Naive thymus-derived CD4-positive, alpha-beta T cell (primary cell): ENCODE measurements at regions of chr3 and their contacts with region 1.

Region 1: GRCh38 chr3:106333911-106334618 is 465.3 kb upstream of the CBLB start:
- DNase-seq: peak in 1 of 9 donors; percentile 45
- ATAC-seq: peak; percentile 47
- H3K4me3 ChIP-seq: no peak overlapping the region
- H3K4me3 Mint-ChIP-seq: peak overlapping the region in 1 of 10 donors; percentile 73
- H3K27ac ChIP-seq: no peak overlapping the region
- H3K27ac Mint-ChIP-seq: peak overlapping the region in 3 of 9 donors; percentile 47 to 86 (median 62)
- H3K4me1 ChIP-seq: peaks cover 0 to 47% of the 10 kb centered on the region in 2 donors
- H3K4me1 Mint-ChIP-seq: peaks cover 19 to 69% (median 38%) of the 10 kb centered on the region in 7 donors
- H3K27me3 ChIP-seq: no peaks in the 10 kb centered on the region
- H3K27me3 Mint-ChIP-seq: no peaks in the 10 kb centered on the region

Region 2: DNA sequence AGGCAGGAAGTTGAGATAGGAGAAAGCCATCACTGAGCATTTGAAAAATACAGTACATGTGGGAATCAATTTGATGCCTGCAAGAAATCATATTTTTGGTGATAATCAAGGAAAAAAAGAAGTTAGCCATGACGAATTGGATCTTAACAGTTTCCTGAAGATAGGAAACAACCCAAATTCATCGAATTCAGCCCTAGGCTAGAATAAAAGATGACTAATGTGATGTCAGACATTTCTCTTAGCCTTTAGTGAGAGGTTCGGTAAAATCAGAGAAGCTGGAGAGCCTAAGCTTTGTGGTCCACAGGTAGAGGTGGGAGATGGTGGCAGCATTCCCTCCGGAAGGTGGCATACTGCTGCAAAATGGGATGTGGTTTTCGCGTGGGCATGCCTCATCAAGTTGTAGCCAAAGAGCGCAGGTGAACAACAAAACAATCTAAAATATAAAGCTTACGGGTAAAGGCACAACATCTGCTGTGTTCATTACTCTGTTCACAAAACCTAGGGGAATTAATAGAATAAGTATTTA is 1111.4 kb before region 1 on chr3:
- CTCF ChIA-PET with region 1: no interaction called
- POLR2A ChIA-PET with region 1: no interaction called
- intact Hi-C with region 1: no loop called
- DNase-seq: no peak
- ATAC-seq: no peak
- H3K4me3 ChIP-seq: no peak overlapping the region
- H3K4me3 Mint-ChIP-seq: no peak overlapping the region
- H3K27ac ChIP-seq: no peak overlapping the region
- H3K27ac Mint-ChIP-seq: no peak overlapping the region
- H3K4me1 ChIP-seq: no peaks in the 10 kb centered on the region
- H3K4me1 Mint-ChIP-seq: no peaks in the 10 kb centered on the region
- H3K27me3 ChIP-seq: no peaks in the 10 kb centered on the region
- H3K27me3 Mint-ChIP-seq: peaks cover 0 to 6% (median 0%) of the 10 kb centered on the region in 5 donors

Region 3: GRCh38 chr3:105836533-105836932 is 497.5 kb before region 1 on chr3:
- CTCF ChIA-PET with region 1: no interaction called
- POLR2A ChIA-PET with region 1: no interaction called
- intact Hi-C with region 1: loop called in 1 of 2 experiments (anchors 10 kb)
- DNase-seq: no peak
- ATAC-seq: peak; percentile 65
- H3K4me3 ChIP-seq: no peak overlapping the region
- H3K4me3 Mint-ChIP-seq: peak overlapping the region in 8 of 10 donors; percentile 4 to 46 (median 19)
- H3K27ac ChIP-seq: no peak overlapping the region
- H3K27ac Mint-ChIP-seq: peak overlapping the region in 7 of 9 donors; percentile 6 to 84 (median 42)
- H3K4me1 ChIP-seq: peaks cover 26 to 44% of the 10 kb centered on the region in 2 donors
- H3K4me1 Mint-ChIP-seq: peaks cover 37 to 87% (median 82%) of the 10 kb centered on the region in 7 donors
- H3K27me3 ChIP-seq: no peaks in the 10 kb centered on the region
- H3K27me3 Mint-ChIP-seq: no peaks in the 10 kb centered on the region

Region 4: GRCh38 chr3:106013971-106014370 is 320.1 kb before region 1 on chr3:
- CTCF ChIA-PET with region 1: interaction called, 3 read pairs
- POLR2A ChIA-PET with region 1: no interaction called
- intact Hi-C with region 1: loop called in 1 of 2 experiments (anchors 10 kb)
- DNase-seq: no peak
- ATAC-seq: no peak
- H3K4me3 ChIP-seq: no peak overlapping the region
- H3K4me3 Mint-ChIP-seq: no peak overlapping the region
- H3K27ac ChIP-seq: no peak overlapping the region
- H3K27ac Mint-ChIP-seq: no peak overlapping the region
- H3K4me1 ChIP-seq: peaks cover 0 to 5% of the 10 kb centered on the region in 2 donors
- H3K4me1 Mint-ChIP-seq: peaks cover 9 to 25% (median 13%) of the 10 kb centered on the region in 7 donors
- H3K27me3 ChIP-seq: no peaks in the 10 kb centered on the region
- H3K27me3 Mint-ChIP-seq: no peaks in the 10 kb centered on the region

Region 5: DNA sequence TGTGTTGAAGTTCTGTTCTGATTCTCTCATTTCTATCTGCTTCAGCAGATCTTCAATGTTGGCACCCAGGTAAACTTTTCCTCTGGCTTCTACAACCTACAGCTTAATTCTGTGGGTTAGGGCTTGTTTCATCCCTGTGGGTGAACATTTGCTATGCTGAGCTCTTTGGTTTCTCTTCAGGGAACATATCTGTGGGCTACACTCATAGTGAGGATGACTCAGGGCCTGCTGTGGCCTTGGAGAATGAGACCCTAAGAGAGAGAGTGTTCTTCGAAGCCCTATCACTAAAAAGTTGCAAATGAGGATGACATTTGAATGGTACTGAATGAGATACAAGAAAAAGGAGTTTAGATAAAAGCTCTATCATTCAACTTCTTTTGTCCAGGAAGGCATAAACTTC is 119.0 kb before region 1 on chr3:
- CTCF ChIA-PET with region 1: no interaction called
- POLR2A ChIA-PET with region 1: no interaction called
- intact Hi-C with region 1: loop called in 1 of 2 experiments (anchors 10 kb)
- DNase-seq: peak in 1 of 9 donors; percentile 31
- ATAC-seq: no peak
- H3K4me3 ChIP-seq: no peak overlapping the region
- H3K4me3 Mint-ChIP-seq: peak overlapping the region in 1 of 10 donors; percentile 5
- H3K27ac ChIP-seq: no peak overlapping the region
- H3K27ac Mint-ChIP-seq: peak overlapping the region in 3 of 9 donors; percentile 14 to 50 (median 18)
- H3K4me1 ChIP-seq: peaks cover 0 to 3% of the 10 kb centered on the region in 2 donors
- H3K4me1 Mint-ChIP-seq: peaks cover 0 to 29% (median 6%) of the 10 kb centered on the region in 7 donors
- H3K27me3 ChIP-seq: no peaks in the 10 kb centered on the region
- H3K27me3 Mint-ChIP-seq: no peaks in the 10 kb centered on the region

Region 6: GRCh38 chr3:106302451-106303221 is 31.4 kb before region 1 on chr3:
- CTCF ChIA-PET with region 1: no interaction called
- POLR2A ChIA-PET with region 1: no interaction called
- intact Hi-C with region 1: loop called in 1 of 2 experiments (anchors 2 kb)
- DNase-seq: peak in 1 of 9 donors; percentile 13
- ATAC-seq: peak; percentile 58
- H3K4me3 ChIP-seq: no peak overlapping the region
- H3K4me3 Mint-ChIP-seq: peak overlapping the region in 1 of 10 donors; percentile 4
- H3K27ac ChIP-seq: no peak overlapping the region
- H3K27ac Mint-ChIP-seq: peak overlapping the region in 6 of 9 donors; percentile 1 to 67 (median 14)
- H3K4me1 ChIP-seq: peaks cover 5 to 10% of the 10 kb centered on the region in 2 donors
- H3K4me1 Mint-ChIP-seq: peaks cover 6 to 41% (median 12%) of the 10 kb centered on the region in 7 donors
- H3K27me3 ChIP-seq: no peaks in the 10 kb centered on the region
- H3K27me3 Mint-ChIP-seq: no peaks in the 10 kb centered on the region

Region 7: GRCh38 chr3:106317141-106318055 is 16.7 kb before region 1 on chr3:
- CTCF ChIA-PET with region 1: no interaction called
- POLR2A ChIA-PET with region 1: no interaction called
- intact Hi-C with region 1: no loop called
- DNase-seq: peak in 6 of 9 donors; percentile 44 to 68 (median 56)
- ATAC-seq: peak; percentile 52
- H3K4me3 ChIP-seq: no peak overlapping the region
- H3K4me3 Mint-ChIP-seq: peak overlapping the region; percentile 26 to 71 (median 46)
- H3K27ac ChIP-seq: no peak overlapping the region
- H3K27ac Mint-ChIP-seq: peak overlapping the region in 7 of 9 donors; percentile 35 to 97 (median 80)
- H3K4me1 ChIP-seq: peaks cover 3 to 10% of the 10 kb centered on the region in 2 donors
- H3K4me1 Mint-ChIP-seq: peaks cover 14 to 51% (median 26%) of the 10 kb centered on the region in 7 donors
- H3K27me3 ChIP-seq: no peaks in the 10 kb centered on the region
- H3K27me3 Mint-ChIP-seq: no peaks in the 10 kb centered on the region

Region 8: DNA sequence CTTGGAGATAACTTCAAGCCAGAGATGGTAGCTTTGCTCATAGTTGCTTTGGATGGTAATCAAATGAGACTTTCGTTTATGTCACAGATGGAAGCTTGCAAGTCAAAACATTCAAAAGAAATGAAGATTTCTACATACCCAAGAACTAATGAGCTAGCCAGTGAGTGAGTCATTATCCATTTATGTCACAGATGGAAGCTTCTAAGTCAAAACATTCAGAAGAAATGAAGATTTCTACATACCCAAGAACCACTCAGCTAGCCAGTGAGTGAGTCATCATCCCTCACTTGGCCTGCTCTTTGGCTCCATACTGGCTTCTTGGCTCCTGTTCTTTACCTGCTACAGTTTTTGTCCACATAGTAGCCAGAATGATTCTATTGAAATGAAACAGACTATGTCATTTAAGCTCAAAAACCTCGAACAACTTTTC is 94.5 kb after region 1 on chr3:
- CTCF ChIA-PET with region 1: no interaction called
- POLR2A ChIA-PET with region 1: no interaction called
- intact Hi-C with region 1: loop called in 1 of 2 experiments (anchors 5 kb)
- DNase-seq: peak in 1 of 9 donors; percentile 34
- ATAC-seq: no peak
- H3K4me3 ChIP-seq: no peak overlapping the region
- H3K4me3 Mint-ChIP-seq: no peak overlapping the region
- H3K27ac ChIP-seq: no peak overlapping the region
- H3K27ac Mint-ChIP-seq: no peak overlapping the region
- H3K4me1 ChIP-seq: peaks cover 0 to 8% of the 10 kb centered on the region in 2 donors
- H3K4me1 Mint-ChIP-seq: peaks cover 0 to 34% (median 8%) of the 10 kb centered on the region in 7 donors
- H3K27me3 ChIP-seq: no peaks in the 10 kb centered on the region
- H3K27me3 Mint-ChIP-seq: no peaks in the 10 kb centered on the region